ENCODE measurements at regions of chr10 and their contacts with region 1.

Region 1: DNA sequence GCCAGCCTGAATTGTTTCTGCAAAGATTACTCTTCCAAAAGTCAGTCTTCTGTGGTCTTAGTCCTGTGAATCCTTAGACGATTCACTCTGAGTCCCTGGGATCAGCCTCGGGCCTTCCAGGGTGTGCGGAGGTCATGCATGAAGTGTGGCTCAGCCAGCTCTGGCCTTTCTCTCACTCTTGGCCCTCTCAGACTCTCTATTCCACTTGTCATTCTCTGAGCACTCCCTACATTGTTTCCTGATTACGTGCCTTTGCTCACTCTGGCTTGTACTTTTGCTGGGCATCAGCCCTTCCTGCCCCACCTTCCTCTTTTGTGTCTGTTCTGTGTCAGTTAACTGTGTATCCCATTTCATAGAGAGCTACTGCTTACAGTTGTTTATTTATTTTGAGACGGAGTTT is 36.0 kb downstream of the CCNY start:
- DNase-seq: peak; percentile 81
- H3K4me3 Mint-ChIP-seq: peak overlapping the region; percentile 50
- H3K27ac Mint-ChIP-seq: peak overlapping the region; percentile 94
- H3K4me1 Mint-ChIP-seq: peaks cover 48% of the 10 kb centered on the region
- H3K27me3 Mint-ChIP-seq: no peaks in the 10 kb centered on the region
- CTCF ChIP-seq: no peak

Region 2: GRCh38 chr10:35353805-35354204 is 18.5 kb before region 1 on chr10:
- CTCF ChIA-PET with region 1: no interaction called
- POLR2A ChIA-PET with region 1: no interaction called
- intact Hi-C with region 1: loop called (anchors 2 kb)
- DNase-seq: no peak
- H3K4me3 Mint-ChIP-seq: no peak overlapping the region
- H3K27ac Mint-ChIP-seq: no peak overlapping the region
- H3K4me1 Mint-ChIP-seq: peaks cover 30% of the 10 kb centered on the region
- H3K27me3 Mint-ChIP-seq: no peaks in the 10 kb centered on the region
- CTCF ChIP-seq: no peak

Measured in MCF 10A (cell line).